GM10248 (cell line): ENCODE measurements at regions of chr22 and their contacts with region 1.

Region 1: GRCh38 chr22:19730655-19731360 is 7.5 kb downstream of the GP1BB start:
- DNase-seq: peak; percentile 91
- CTCF ChIP-seq: peak; percentile 95

Region 2: GRCh38 chr22:19717691-19718455 is 12.9 kb before region 1 on chr22:
- CTCF ChIA-PET with region 1: interaction called, 20 read pairs
- POLR2A ChIA-PET with region 1: no interaction called
- DNase-seq: peak; percentile 92
- CTCF ChIP-seq: peak; percentile 89

Region 3: GRCh38 chr22:19750507-19751490 is 20.0 kb after region 1 on chr22:
- CTCF ChIA-PET with region 1: interaction called, 25 read pairs
- POLR2A ChIA-PET with region 1: no interaction called
- DNase-seq: no peak
- CTCF ChIP-seq: no peak

Region 4: GRCh38 chr22:19772422-19773324 is 41.9 kb after region 1 on chr22:
- CTCF ChIA-PET with region 1: interaction called, 12 read pairs
- POLR2A ChIA-PET with region 1: no interaction called
- DNase-seq: no peak
- CTCF ChIP-seq: no peak

Region 5: DNA sequence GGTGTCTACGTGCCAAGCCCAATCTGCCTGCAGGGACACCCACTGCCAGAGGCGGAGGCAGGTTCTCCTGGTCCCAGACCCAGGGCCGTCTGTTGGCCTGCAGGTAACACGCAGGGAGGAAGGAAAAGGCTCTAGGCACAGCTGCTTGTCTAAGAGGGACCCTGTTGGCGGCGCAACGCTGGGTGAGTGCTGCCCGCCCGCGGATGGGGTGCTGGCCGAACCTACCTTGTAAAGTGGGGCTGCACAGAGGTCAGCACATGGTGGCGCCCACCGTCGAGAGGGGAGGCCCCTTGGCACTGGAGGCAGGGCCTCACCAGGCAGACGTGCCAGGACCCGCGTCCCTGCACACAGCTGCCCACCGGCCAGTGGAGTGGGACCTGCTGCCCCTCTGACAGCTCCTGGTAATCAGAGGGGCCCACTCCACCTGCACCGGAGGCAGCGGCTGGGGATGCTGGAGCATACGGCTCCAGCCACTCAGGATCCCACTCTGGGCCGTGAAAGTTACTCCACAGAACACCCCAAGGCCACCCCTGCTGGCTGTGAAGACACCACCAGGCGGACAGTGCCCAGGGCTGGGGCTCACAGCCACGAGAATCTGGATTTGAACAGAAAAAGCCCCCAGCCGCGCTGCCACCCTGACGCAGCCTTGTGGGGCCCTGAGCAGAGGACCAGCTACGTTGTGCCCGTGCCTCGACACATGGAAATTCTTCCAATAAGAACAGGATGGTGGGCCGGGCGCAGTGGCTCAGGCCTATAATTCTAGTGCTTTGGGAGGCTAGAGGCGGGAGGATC is 53.8 kb after region 1 on chr22:
- CTCF ChIA-PET with region 1: no interaction called
- POLR2A ChIA-PET with region 1: no interaction called
- DNase-seq: no peak
- CTCF ChIP-seq: no peak

Region 6: GRCh38 chr22:19903031-19903430 is 172.2 kb after region 1 on chr22:
- CTCF ChIA-PET with region 1: interaction called, 46 read pairs
- POLR2A ChIA-PET with region 1: no interaction called
- DNase-seq: no peak
- CTCF ChIP-seq: no peak

Region 7: GRCh38 chr22:19948057-19948760 is 217.4 kb after region 1 on chr22:
- CTCF ChIA-PET with region 1: interaction called, 37 read pairs
- POLR2A ChIA-PET with region 1: no interaction called
- DNase-seq: no peak
- CTCF ChIP-seq: no peak